CD4-positive, alpha-beta memory T cell (primary cell): ENCODE measurements at regions of chr3 and their contacts with region 1.

Region 1: DNA sequence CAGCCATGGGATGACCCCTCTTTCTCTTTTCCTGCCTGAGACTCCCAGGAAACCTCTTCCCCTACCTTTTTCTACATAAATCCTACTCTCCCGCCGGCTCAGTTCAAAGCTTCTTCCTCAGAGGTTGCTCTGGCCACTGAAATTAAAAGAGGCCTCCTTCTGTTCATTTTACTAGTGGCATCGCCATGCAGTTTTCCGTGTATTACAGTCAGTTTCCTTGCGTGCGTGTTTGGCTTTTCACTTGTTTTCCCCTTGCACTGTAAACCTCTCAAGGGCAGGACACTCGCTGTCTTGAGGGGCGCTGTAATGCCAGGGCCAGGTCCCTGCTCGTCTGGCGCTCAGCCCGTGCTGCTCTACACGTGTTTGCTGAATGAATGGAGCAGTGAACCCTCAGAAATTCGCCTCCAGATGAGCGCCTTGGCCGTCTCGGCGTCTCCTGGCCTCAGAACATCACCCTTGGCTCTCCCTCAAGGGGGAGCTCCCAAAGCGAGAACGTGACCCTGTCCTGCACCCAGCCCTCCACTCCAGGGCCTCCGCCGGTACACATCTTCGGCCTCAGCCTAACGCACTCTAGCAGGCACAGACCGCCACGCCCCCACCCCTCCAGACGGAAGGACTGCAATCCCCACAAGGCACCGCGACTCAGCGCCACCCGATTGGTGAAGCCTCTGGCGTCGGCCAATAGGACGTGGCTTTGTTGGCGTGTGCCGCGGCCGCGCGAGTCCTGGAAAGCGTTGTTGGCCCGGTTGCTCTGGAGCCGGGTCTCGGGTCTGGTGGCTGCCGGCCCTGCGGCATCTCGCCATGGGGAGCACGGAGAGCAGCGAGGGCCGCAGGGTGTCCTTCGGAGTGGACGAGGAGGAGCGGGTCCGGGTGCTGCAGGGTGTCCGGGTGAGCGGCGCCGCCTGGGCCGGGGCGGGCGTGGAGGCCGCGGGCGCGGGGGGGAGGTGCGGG is at the start of gene CHCHD6:
- DNase-seq: peak; percentile 93 to 98 (median 95)
- H3K4me3 ChIP-seq: peak within 1 kb of the TSS; percentile 34 to 81
- H3K4me3 Mint-ChIP-seq: peak within 1 kb of the TSS; percentile 91 to 98 (median 96)
- H3K27ac ChIP-seq: peak within 1 kb of the TSS; percentile 49
- H3K27ac Mint-ChIP-seq: peak within 1 kb of the TSS; percentile 88 to 97 (median 92)
- H3K4me1 ChIP-seq: peaks cover 18% of the 10 kb centered on the region
- H3K4me1 Mint-ChIP-seq: peaks cover 10 to 26% (median 17%) of the 10 kb centered on the region in 4 donors
- H3K27me3 ChIP-seq: no peaks in the 10 kb centered on the region
- H3K27me3 Mint-ChIP-seq: peaks cover 11 to 26% of the 10 kb centered on the region in 2 donors
- total RNA-seq, gene CHCHD6: 7.3 to 8.9 TPM

Region 2: GRCh38 chr3:125594581-125595011 is 1109.2 kb before region 1 on chr3:
- CTCF ChIA-PET with region 1: no interaction called
- POLR2A ChIA-PET with region 1: no interaction called
- intact Hi-C with region 1: loop called (anchors 5 kb)
- DNase-seq: peak in 1 of 5 donors; percentile 2
- H3K4me3 ChIP-seq: peak overlapping the region; percentile 43 to 80
- H3K4me3 Mint-ChIP-seq: peak overlapping the region; percentile 88 to 100 (median 98)
- H3K27ac ChIP-seq: peak overlapping the region; percentile 75
- H3K27ac Mint-ChIP-seq: peak overlapping the region; percentile 88 to 99 (median 93)
- H3K4me1 ChIP-seq: peaks cover 52% of the 10 kb centered on the region
- H3K4me1 Mint-ChIP-seq: peaks cover 25 to 55% (median 40%) of the 10 kb centered on the region in 4 donors
- H3K27me3 ChIP-seq: no peaks in the 10 kb centered on the region
- H3K27me3 Mint-ChIP-seq: no peaks in the 10 kb centered on the region

Region 3: GRCh38 chr3:126357295-126358037 is 346.3 kb before region 1 on chr3 and contains the start of gene KLF15:
- CTCF ChIA-PET with region 1: no interaction called
- POLR2A ChIA-PET with region 1: no interaction called
- intact Hi-C with region 1: loop called (anchors 5 kb)
- DNase-seq: peak; percentile 64 to 72 (median 66)
- H3K4me3 ChIP-seq: peak within 1 kb of the TSS; percentile 42 to 49
- H3K4me3 Mint-ChIP-seq: peak within 1 kb of the TSS; percentile 85 to 93 (median 90)
- H3K27ac ChIP-seq: no peak within 1 kb of the TSS
- H3K27ac Mint-ChIP-seq: peak within 1 kb of the TSS in 6 of 7 donors; percentile 48 to 84 (median 66)
- H3K4me1 ChIP-seq: peaks cover 9% of the 10 kb centered on the region
- H3K4me1 Mint-ChIP-seq: peaks cover 9 to 25% (median 12%) of the 10 kb centered on the region in 4 donors
- H3K27me3 ChIP-seq: peaks cover 40% of the 10 kb centered on the region
- H3K27me3 Mint-ChIP-seq: peaks cover 36 to 44% of the 10 kb centered on the region in 2 donors
- total RNA-seq, gene KLF15: 0.67 to 0.72 TPM

Region 4: DNA sequence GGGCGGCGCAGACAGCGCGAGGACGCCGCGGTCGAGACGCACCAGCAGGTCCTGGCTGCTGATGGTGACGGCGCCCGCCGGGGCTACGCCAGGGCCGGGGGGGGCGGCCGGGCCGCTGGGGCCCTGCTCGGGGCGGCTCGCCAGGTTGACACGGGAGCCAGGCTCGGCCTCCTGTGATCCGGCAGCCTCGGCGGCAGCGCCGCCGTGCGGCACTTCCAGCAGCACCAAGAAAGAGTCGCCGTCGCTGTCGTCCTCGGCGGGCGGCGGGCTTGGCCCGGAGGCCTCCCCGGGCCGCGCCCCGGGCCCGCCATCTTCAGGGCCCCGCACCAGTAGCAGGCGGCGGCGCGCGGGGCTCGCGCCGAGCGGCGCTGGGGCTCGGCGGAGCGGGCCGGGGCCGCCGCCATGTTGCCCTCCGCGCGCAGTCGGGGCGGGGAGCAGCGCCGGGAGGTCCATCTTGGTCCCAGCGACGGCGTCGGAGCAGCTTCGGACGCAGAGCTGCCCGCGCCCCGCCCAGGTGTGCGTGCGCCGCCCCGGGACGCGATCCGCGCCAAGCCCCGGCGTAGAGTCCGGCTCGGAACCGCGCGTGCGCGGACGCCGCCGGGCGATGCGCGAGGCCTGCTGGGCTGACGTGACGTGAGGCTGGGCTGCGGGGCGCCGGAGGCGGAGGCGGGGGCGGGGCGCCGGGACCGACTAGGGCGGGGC is 228.2 kb before region 1 on chr3 and contains the start of gene ZXDC:
- CTCF ChIA-PET with region 1: no interaction called
- POLR2A ChIA-PET with region 1: no interaction called
- intact Hi-C with region 1: loop called (anchors 5 kb)
- DNase-seq: peak; percentile 90 to 93 (median 92)
- H3K4me3 ChIP-seq: peak within 1 kb of the TSS; percentile 60 to 73
- H3K4me3 Mint-ChIP-seq: peak within 1 kb of the TSS; percentile 87 to 94 (median 92)
- H3K27ac ChIP-seq: peak within 1 kb of the TSS; percentile 64
- H3K27ac Mint-ChIP-seq: peak within 1 kb of the TSS; percentile 83 to 98 (median 92)
- H3K4me1 ChIP-seq: peaks cover 36% of the 10 kb centered on the region
- H3K4me1 Mint-ChIP-seq: peaks cover 30 to 55% (median 44%) of the 10 kb centered on the region in 4 donors
- H3K27me3 ChIP-seq: no peaks in the 10 kb centered on the region
- H3K27me3 Mint-ChIP-seq: no peaks in the 10 kb centered on the region
- total RNA-seq, gene ZXDC: 58.2 to 66.3 TPM

Region 5: GRCh38 chr3:126654571-126655383 is 49.0 kb before region 1 on chr3 and contains the start of gene TXNRD3:
- CTCF ChIA-PET with region 1: interaction called, 3 read pairs
- POLR2A ChIA-PET with region 1: no interaction called
- intact Hi-C with region 1: loop called (anchors 1 kb)
- DNase-seq: peak; percentile 48 to 55 (median 53)
- H3K4me3 ChIP-seq: peak within 1 kb of the TSS; percentile 17 to 38
- H3K4me3 Mint-ChIP-seq: peak within 1 kb of the TSS; percentile 85 to 90 (median 88)
- H3K27ac ChIP-seq: no peak within 1 kb of the TSS
- H3K27ac Mint-ChIP-seq: peak within 1 kb of the TSS in 2 of 7 donors; percentile 52 to 75
- H3K4me1 ChIP-seq: no peaks in the 10 kb centered on the region
- H3K4me1 Mint-ChIP-seq: peaks cover 4 to 8% (median 5%) of the 10 kb centered on the region in 4 donors
- H3K27me3 ChIP-seq: no peaks in the 10 kb centered on the region
- H3K27me3 Mint-ChIP-seq: peaks cover 11 to 28% of the 10 kb centered on the region in 2 donors
- total RNA-seq, gene TXNRD3: 0.87 to 0.97 TPM

Region 6: DNA sequence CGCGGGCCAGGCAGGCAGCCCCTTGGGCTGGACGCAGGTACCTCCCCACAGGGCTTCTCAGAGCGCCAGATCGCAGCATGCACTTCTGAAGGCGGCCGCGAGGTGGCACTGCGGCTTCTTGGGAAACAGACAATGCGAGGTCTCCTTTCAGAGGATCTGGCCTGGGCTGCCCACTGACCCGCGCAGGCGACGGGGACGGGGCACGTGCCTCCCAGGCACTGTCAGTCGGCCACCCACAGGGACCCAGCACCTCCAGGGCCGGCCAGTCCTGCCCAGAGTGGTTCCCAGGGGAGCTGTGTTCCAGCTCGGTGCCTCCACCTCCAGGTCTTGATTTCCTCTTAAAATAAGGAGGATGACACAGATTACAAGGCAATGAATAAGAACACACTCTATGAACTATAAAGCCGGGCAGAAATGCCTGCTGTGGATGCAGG is 24.5 kb before region 1 on chr3:
- CTCF ChIA-PET with region 1: interaction called, 14 read pairs
- POLR2A ChIA-PET with region 1: no interaction called
- intact Hi-C with region 1: no loop called
- DNase-seq: peak; percentile 58 to 73 (median 65)
- H3K4me3 ChIP-seq: no peak overlapping the region
- H3K4me3 Mint-ChIP-seq: peak overlapping the region in 5 of 8 donors; percentile 5 to 71 (median 55)
- H3K27ac ChIP-seq: no peak overlapping the region
- H3K27ac Mint-ChIP-seq: no peak overlapping the region
- H3K4me1 ChIP-seq: peaks cover 3% of the 10 kb centered on the region
- H3K4me1 Mint-ChIP-seq: peaks cover 0 to 8% (median 3%) of the 10 kb centered on the region in 4 donors
- H3K27me3 ChIP-seq: no peaks in the 10 kb centered on the region
- H3K27me3 Mint-ChIP-seq: peaks cover 8 to 28% of the 10 kb centered on the region in 2 donors